Vagina (tissue), 2 donors: ENCODE measurements at regions of chr16 and their contacts with region 1.

Region 1: DNA sequence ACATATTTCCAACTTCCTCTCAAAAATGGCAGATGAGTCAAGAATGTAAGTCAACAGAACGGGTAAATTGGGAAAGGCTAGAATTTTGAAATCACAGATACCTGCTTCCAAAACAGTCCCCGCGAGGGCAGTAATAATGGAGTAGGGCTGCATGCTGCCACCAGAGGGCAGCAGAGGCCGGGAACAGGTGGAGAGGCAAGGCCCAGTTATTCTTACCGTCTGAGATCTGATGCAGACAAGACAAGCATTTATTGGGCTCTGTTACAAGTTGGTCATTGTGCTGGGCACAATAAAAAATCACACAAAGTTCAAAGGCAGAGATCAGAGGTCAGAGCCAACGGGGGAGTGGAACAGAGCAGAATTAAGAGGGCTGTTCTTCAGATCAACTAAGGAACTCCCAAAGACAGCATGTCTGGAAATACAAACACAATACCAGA is 8.8 kb upstream of the MLKL start:
- DNase-seq: peak in 1 of 2 donors; percentile 86
- H3K4me3 ChIP-seq: no peak overlapping the region
- H3K27ac ChIP-seq: no peak overlapping the region
- H3K4me1 ChIP-seq: no peaks in the 10 kb centered on the region
- H3K27me3 ChIP-seq: no peaks in the 10 kb centered on the region
- CTCF ChIP-seq: peak; percentile 91 to 95 (median 93)
- POLR2A ChIP-seq: no peak

Region 2: GRCh38 chr16:74729783-74730699 is 20.6 kb after region 1 on chr16:
- intact Hi-C with region 1: no loop called
- DNase-seq: no peak
- H3K4me3 ChIP-seq: no peak overlapping the region
- H3K27ac ChIP-seq: no peak overlapping the region
- H3K4me1 ChIP-seq: peaks cover 7% of the 10 kb centered on the region
- H3K27me3 ChIP-seq: no peaks in the 10 kb centered on the region
- CTCF ChIP-seq: no peak
- POLR2A ChIP-seq: no peak

Region 3: GRCh38 chr16:74862741-74863244 is 153.3 kb after region 1 on chr16:
- intact Hi-C with region 1: loop called (anchors 10 kb)
- DNase-seq: no peak
- H3K4me3 ChIP-seq: no peak overlapping the region
- H3K27ac ChIP-seq: no peak overlapping the region
- H3K4me1 ChIP-seq: peaks cover 11% of the 10 kb centered on the region
- H3K27me3 ChIP-seq: no peaks in the 10 kb centered on the region
- CTCF ChIP-seq: peak; percentile 66 to 76 (median 66)
- POLR2A ChIP-seq: no peak